Activated CD4-positive, alpha-beta T cell treated with anti-CD3 and anti-CD28 coated beads for 36 hours (primary cell): ENCODE measurements at regions of chr1 and their contacts with region 1.

Region 1: GRCh38 chr1:77683160-77684148 is 996 bp upstream of the ZZZ3 start:
- DNase-seq: peak; percentile 96
- ATAC-seq: peak; percentile 72
- H3K4me3 Mint-ChIP-seq: peak overlapping the region; percentile 98
- H3K27ac Mint-ChIP-seq: peak overlapping the region; percentile 95
- H3K4me1 Mint-ChIP-seq: peaks cover 31% of the 10 kb centered on the region
- H3K27me3 Mint-ChIP-seq: no peaks in the 10 kb centered on the region

Region 2: DNA sequence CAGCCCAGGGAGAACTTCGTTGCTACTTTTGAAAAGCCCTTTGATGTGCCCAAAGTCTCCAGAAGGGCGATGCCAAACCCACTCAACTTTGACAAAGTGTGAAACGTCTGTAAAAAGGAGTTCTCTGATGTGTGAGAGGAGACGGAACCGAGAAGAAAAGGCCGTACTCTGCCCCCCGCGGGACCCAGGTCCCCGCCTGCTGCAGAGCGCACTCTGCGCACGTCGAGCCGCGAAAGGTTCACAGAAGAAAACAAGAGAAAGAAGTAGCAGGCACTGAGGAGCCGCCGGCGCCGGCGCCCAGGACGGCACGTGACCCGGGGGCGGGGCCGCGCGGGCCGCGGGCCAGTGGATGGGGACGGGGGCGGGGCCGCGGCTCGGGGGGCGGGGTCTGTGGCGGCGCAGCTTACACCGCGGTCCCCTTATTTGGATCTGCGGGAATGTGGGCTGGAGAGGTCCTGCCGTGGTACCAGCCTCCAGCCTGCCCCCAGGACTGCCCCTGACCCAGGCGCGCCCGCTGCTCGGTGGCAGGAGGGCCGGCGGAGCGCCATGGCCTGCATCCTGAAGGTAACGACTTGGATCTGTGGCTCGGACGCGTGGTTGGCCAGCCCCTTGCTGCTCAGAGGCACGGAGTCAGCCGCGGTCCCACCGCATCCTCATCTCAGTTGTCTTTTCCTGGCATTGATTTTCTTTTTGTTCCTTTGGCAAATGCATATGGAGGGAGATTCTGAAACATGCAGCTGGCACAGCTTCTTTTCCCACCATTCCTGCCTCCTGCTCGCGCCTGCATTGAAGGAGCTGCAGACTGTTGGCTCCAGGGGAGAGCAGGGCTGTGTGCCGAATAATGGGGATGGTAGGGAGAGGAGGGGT is 1608.9 kb before region 1 on chr1 and contains the start of gene ST6GALNAC3:
- CTCF ChIA-PET with region 1: no interaction called
- POLR2A ChIA-PET with region 1: no interaction called
- intact Hi-C with region 1: loop called in 1 of 2 experiments (anchors 10 kb)
- DNase-seq: peak; percentile 86
- ATAC-seq: peak; percentile 99
- H3K4me3 Mint-ChIP-seq: peak within 1 kb of the TSS; percentile 74
- H3K27ac Mint-ChIP-seq: peak within 1 kb of the TSS; percentile 21
- H3K4me1 Mint-ChIP-seq: peaks cover 23% of the 10 kb centered on the region
- H3K27me3 Mint-ChIP-seq: no peaks in the 10 kb centered on the region
- total RNA-seq, gene ST6GALNAC3: 0.73 to 1.1 TPM

Region 3: GRCh38 chr1:77281491-77282186 is 401.8 kb before region 1 on chr1 and contains the start of gene AK5:
- CTCF ChIA-PET with region 1: no interaction called
- POLR2A ChIA-PET with region 1: no interaction called
- intact Hi-C with region 1: loop called (anchors 2 kb)
- DNase-seq: peak; percentile 75
- ATAC-seq: peak; percentile 77
- H3K4me3 Mint-ChIP-seq: peak within 1 kb of the TSS; percentile 70
- H3K27ac Mint-ChIP-seq: peak within 1 kb of the TSS; percentile 64
- H3K4me1 Mint-ChIP-seq: peaks cover 32% of the 10 kb centered on the region
- H3K27me3 Mint-ChIP-seq: no peaks in the 10 kb centered on the region
- total RNA-seq, gene AK5: 9.9 TPM

Region 4: DNA sequence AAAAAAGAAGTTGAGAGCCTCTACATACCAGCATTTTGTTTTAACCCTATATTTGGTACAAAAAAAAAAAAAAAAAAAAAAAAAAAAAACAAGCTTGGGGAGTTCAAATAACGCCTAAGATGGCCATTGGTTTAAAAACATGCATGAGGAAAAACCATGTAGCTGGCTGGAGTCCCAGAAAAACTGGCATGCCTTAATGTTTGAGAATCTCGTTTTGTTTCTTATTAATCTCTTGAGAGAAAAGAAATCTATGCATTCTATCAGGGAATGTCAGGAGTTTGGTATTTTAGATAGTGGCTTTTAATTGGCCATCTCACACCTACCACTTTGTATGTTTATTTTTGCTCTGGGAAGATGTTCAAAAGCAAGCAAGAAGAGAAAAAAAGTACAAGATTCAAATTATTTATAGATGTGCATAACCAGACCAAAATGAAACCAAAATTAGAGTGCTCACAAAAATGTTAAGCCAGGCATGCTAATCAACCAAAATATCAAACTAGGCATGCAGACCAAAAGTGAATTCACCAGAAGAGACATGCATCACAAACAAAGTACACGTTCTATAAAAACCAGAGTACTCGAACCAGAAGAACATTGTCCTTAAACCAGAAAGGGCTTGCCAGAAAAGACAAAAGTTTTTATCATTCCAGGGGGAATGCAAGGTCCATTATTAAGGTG is 245.1 kb before region 1 on chr1:
- CTCF ChIA-PET with region 1: no interaction called
- POLR2A ChIA-PET with region 1: no interaction called
- intact Hi-C with region 1: loop called in 1 of 2 experiments (anchors 5 kb)
- DNase-seq: no peak
- ATAC-seq: no peak
- H3K4me3 Mint-ChIP-seq: peak overlapping the region; percentile 27
- H3K27ac Mint-ChIP-seq: peak overlapping the region; percentile 88
- H3K4me1 Mint-ChIP-seq: peaks cover 35% of the 10 kb centered on the region
- H3K27me3 Mint-ChIP-seq: no peaks in the 10 kb centered on the region

Region 5: GRCh38 chr1:77704736-77705135 is 21.3 kb after region 1 on chr1:
- CTCF ChIA-PET with region 1: no interaction called
- POLR2A ChIA-PET with region 1: no interaction called
- intact Hi-C with region 1: no loop called
- DNase-seq: no peak
- ATAC-seq: no peak
- H3K4me3 Mint-ChIP-seq: no peak overlapping the region
- H3K27ac Mint-ChIP-seq: peak overlapping the region; percentile 34
- H3K4me1 Mint-ChIP-seq: no peaks in the 10 kb centered on the region
- H3K27me3 Mint-ChIP-seq: no peaks in the 10 kb centered on the region

Region 6: DNA sequence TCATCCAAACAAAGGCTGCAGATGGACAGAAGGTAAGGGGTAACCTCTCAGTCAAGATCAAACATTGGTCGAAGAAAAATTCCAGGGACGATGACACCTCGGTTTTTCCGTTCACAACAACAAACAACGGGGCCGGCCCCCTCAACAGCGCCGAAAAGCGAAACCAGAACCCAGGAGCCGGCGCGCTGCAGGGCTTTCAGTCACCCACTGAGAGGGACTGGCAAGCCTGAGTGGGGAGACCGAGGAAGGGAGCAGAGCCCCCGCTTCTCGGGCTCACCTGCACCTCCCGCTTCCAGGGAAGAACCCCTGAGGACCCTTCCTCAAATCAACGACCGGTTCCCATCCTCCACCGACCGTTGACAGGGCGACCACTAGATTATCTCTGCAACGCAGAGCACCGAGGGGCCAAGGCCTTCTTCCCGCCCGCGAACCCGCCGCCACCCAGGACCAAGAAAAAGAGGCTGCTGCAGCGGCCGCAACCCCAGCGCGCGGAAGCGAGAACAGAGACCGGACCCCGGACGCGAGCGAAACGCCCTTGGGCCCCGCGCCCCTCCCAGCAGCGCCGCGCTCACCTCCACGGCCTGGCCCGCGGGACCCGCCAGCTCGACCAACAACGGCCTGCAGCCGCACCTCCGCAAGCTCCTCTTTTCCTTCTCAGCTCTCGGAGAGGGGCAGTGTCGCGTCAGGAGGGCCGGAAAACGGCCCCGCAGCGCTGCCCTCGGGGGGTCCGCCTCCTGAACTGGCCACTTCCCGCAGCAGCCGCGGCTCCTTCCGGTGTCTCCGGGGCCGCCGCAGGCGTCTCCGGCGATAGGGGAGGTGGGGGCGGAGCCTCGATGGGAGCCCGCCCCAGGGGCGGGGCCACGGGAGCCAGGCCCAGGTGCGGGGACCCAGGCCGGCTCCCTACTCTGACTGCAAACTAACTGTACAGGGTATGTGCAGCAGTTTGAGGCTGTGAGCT is 75.9 kb after region 1 on chr1 and contains the start of gene USP33:
- CTCF ChIA-PET with region 1: no interaction called
- POLR2A ChIA-PET with region 1: no interaction called
- intact Hi-C with region 1: loop called (anchors 1 to 2 kb)
- DNase-seq: peak; percentile 95
- ATAC-seq: peak; percentile 98
- H3K4me3 Mint-ChIP-seq: peak within 1 kb of the TSS; percentile 89
- H3K27ac Mint-ChIP-seq: peak within 1 kb of the TSS; percentile 92
- H3K4me1 Mint-ChIP-seq: peaks cover 41% of the 10 kb centered on the region
- H3K27me3 Mint-ChIP-seq: no peaks in the 10 kb centered on the region
- total RNA-seq, gene USP33: 36.3 to 36.8 TPM

Region 7: DNA sequence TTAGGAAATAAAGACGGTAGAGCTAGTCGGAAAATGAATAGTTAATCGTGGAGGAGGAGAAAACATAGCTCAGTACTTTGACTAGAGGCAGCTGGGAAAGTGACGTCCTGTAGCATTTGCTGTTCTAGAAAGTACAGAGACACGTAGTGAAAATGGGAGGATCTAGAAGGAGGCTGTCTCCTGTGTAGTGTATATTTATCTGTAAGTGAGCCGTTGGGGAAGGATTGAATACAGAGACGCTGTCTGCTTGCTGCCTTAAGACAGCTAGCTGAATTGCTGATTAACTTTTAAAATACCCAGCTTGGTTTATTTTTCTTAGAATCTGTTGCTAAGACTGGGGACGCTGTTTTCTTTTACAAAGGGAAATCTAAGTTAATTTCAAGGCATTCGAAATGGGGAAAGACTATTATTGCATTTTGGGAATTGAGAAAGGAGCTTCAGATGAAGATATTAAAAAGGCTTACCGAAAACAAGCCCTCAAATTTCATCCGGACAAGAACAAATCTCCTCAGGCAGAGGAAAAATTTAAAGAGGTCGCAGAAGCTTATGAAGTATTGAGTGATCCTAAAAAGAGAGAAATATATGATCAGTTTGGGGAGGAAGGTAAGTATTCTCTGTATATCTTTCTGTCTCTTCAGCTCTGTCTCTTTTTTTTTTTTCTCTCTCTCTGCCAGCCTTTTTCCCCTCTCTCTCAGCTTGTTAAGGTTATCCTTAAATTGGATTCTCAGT is 321.4 kb after region 1 on chr1 and contains the start of gene DNAJB4:
- CTCF ChIA-PET with region 1: no interaction called
- POLR2A ChIA-PET with region 1: interaction called, 16 read pairs
- intact Hi-C with region 1: loop called in 1 of 2 experiments (anchors 1 kb)
- DNase-seq: peak; percentile 75
- ATAC-seq: peak; percentile 99
- H3K4me3 Mint-ChIP-seq: peak within 1 kb of the TSS; percentile 91
- H3K27ac Mint-ChIP-seq: peak within 1 kb of the TSS; percentile 99
- H3K4me1 Mint-ChIP-seq: peaks cover 41% of the 10 kb centered on the region
- H3K27me3 Mint-ChIP-seq: no peaks in the 10 kb centered on the region
- total RNA-seq, gene DNAJB4: 8.8 to 9.8 TPM